Activated T-helper 2 cell treated with anti-CD3 and anti-CD28 coated beads, Interferon-gamma antibody, Interleukin-2, Interleukin-4, amounts not matched to agents 10 μg/mL and 5 μg/mL and 100 μg/mL, durations not matched to agents 14 hours and 24 hours and 36 hours (primary cell): ENCODE measurements at regions of chr15 and their contacts with region 1.

Region 1: GRCh38 chr15:74768771-74769342 is 13.0 kb upstream of the CSK start:
- DNase-seq: peak; percentile 45
- H3K4me3 Mint-ChIP-seq: no peak overlapping the region
- H3K27ac Mint-ChIP-seq: no peak overlapping the region
- H3K4me1 Mint-ChIP-seq: peaks cover 23% of the 10 kb centered on the region
- H3K27me3 Mint-ChIP-seq: no peaks in the 10 kb centered on the region

Region 2: DNA sequence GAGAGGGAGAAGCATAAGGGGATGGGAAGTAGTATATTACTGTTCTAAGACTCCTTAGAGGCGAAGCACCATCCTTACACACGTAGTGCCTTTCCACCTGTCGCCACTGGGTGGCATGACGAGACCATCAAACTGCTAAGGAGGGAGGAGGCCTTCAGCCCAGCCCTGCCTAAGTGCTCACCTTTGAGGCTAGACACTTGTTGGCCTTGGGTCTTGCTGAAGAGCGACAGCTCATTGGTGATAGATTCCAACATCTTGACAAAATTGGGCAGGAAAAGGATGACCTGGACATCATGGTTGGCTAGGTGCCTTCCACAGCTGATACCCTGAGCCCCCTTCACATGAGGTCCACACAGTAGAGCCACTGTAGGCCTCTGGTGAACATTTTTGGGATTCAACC is 133.6 kb before region 1 on chr15:
- intact Hi-C with region 1: loop called (anchors 1 kb)
- DNase-seq: peak; percentile 61
- H3K4me3 Mint-ChIP-seq: no peak overlapping the region
- H3K27ac Mint-ChIP-seq: no peak overlapping the region
- H3K4me1 Mint-ChIP-seq: no peaks in the 10 kb centered on the region
- H3K27me3 Mint-ChIP-seq: no peaks in the 10 kb centered on the region

Region 3: DNA sequence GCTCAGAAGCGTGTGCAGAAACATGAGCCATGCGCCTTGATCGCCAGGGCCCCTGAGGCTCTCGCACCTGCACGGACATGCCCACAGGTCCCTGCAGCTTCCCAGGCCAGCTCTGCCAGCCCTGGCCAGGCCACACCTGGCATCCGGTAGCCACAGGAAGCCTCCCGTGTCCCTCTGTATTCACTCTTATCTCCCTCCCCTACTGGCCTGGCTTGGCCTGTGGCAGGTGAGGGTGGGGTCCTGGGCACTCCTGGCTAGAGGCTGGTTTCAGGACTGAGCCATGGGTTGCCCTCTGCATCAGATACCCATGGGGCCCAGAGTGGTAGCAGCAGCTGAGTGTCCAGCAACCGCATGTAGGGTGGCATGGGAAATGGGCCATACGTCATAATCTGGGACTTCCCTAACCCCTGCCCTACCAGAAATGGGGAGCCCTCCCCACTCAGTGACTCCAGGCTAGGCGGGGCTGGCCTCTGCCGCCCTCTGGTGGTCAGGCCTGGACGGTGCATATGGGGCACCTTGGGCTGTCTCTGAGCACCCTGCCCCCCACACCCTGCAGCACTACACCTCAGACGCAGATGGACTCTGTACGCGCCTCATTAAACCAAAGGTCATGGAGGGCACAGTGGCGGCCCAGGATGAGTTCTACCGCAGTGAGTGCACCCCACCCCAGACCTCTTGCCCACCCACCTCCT is 31.1 kb after region 1 on chr15:
- intact Hi-C with region 1: loop called (anchors 1 kb)
- DNase-seq: peak; percentile 79
- H3K4me3 Mint-ChIP-seq: no peak overlapping the region
- H3K27ac Mint-ChIP-seq: peak overlapping the region; percentile 81
- H3K4me1 Mint-ChIP-seq: peaks cover 29% of the 10 kb centered on the region
- H3K27me3 Mint-ChIP-seq: no peaks in the 10 kb centered on the region

Region 4: GRCh38 chr15:74950078-74951000 is 181.5 kb after region 1 on chr15:
- intact Hi-C with region 1: loop called (anchors 1 kb)
- DNase-seq: peak; percentile 71
- H3K4me3 Mint-ChIP-seq: no peak overlapping the region
- H3K27ac Mint-ChIP-seq: no peak overlapping the region
- H3K4me1 Mint-ChIP-seq: peaks cover 10% of the 10 kb centered on the region
- H3K27me3 Mint-ChIP-seq: peaks cover 2% of the 10 kb centered on the region